PC-9 (cell line): ENCODE measurements at regions of chr16 and their contacts with region 1.

Region 1: GRCh38 chr16:87930456-87930855 is 5.9 kb downstream of the CA5A start:
- DNase-seq: peak in 1 of 2 experiments; percentile 25
- H3K4me3 ChIP-seq: no peak overlapping the region
- H3K27ac ChIP-seq: no peak overlapping the region
- H3K4me1 ChIP-seq: no peaks in the 10 kb centered on the region
- H3K27me3 ChIP-seq: no peaks in the 10 kb centered on the region
- CTCF ChIP-seq: peak; percentile 59

Region 2: DNA sequence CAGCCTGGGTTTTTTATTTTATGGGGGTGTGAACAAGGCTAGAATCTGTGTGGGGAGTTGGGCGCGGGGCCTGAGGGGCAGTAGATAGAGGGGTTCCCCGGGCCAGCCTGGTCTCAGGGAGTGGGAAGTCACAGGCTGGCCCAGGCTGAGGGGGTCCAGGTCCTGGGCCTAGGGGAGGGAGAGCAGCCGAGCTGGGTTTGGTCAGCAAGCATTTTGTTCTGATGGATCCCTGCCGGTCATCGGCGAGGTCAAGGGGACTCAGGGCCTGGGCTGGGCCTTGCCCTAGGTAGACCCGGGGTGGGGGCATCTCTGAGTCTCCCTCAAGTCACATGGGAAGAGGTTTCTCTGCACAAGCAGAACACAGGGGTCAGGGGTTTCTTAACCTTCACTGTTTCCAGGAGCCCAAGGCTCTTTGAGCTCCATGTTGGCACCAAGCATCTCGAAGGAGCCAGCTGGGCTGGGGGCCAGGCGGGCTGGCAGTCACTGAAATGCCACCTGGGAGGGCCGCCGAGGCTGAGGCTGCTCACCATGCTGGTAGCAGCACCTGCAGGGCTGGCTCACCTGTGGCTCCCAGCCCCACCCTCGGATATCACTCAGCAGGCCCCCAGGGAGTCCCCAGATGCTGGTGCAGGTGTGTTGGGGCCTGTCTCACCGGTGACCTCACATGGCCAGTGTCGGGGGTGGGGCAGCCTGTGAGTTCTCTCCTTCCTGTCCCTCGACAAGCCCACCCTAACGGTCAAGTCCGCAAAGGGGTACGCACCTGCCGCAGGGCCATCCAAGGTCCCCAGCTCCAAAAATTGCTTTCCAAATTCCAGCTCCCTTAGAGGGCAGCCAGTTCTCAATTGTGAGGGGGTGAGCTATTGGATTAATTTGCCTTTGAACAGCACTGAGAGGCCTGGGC is 102.1 kb before region 1 on chr16:
- CTCF ChIA-PET with region 1: interaction called, 13 read pairs
- POLR2A ChIA-PET with region 1: no interaction called
- intact Hi-C with region 1: no loop called
- DNase-seq: peak in 1 of 2 experiments; percentile 52
- H3K4me3 ChIP-seq: no peak overlapping the region
- H3K27ac ChIP-seq: no peak overlapping the region
- H3K4me1 ChIP-seq: no peaks in the 10 kb centered on the region
- H3K27me3 ChIP-seq: no peaks in the 10 kb centered on the region
- CTCF ChIP-seq: no peak

Region 3: DNA sequence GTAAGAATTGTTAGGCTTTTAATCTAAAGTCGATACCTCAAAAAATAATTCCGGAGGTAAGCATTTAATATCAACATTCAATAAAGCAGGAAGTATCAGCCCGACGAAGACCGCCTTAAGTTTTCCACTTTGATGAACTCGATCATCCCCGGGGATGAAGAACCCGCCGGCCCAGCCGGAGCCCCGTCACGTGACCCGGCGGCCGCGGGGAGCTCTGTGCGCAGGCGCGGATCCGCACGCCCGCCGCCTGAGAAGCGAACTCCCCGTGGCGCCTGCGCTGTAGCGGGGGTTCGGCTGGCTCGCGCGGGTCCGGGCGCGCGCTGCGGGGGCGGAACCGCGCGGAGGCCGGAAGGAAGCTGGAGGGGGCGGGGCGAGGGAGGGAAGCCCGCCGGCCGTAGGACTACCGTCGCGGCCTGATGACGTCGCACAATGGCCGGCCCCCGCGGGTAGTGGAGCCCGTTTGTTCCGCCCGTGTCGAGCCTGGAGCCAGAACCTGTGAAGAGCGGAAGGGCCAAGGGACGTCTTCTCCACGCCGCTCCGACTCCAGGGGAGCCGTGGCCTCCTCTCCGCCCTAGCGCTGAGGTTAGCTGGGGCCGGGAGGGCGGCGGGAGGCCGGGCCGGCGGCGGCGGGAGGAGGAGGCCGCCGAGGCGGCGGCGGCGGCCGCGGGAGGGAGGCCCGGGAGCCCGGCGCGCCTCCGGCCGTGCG is 639.7 kb after region 1 on chr16 and contains the start of gene ZC3H18:
- CTCF ChIA-PET with region 1: interaction called, 12 read pairs
- POLR2A ChIA-PET with region 1: no interaction called
- intact Hi-C with region 1: no loop called
- DNase-seq: peak; percentile 78 to 97
- H3K4me3 ChIP-seq: peak within 1 kb of the TSS; percentile 95
- H3K27ac ChIP-seq: no peak within 1 kb of the TSS
- H3K4me1 ChIP-seq: peaks cover 18% of the 10 kb centered on the region
- H3K27me3 ChIP-seq: no peaks in the 10 kb centered on the region
- CTCF ChIP-seq: no peak
- total RNA-seq, gene ZC3H18: 76.4 and 78.4 TPM in 2 replicates

Region 4: GRCh38 chr16:88599092-88599733 is 668.8 kb after region 1 on chr16:
- CTCF ChIA-PET with region 1: interaction called, 10 read pairs
- POLR2A ChIA-PET with region 1: no interaction called
- intact Hi-C with region 1: no loop called
- DNase-seq: no peak
- H3K4me3 ChIP-seq: no peak overlapping the region
- H3K27ac ChIP-seq: no peak overlapping the region
- H3K4me1 ChIP-seq: no peaks in the 10 kb centered on the region
- H3K27me3 ChIP-seq: no peaks in the 10 kb centered on the region
- CTCF ChIP-seq: no peak